Activated naive CD4-positive, alpha-beta T cell treated with anti-CD3 and anti-CD28 coated beads, Interleukin-2, amount 10 ng/mL, durations not matched to agents 7 days and 5 days (primary cell): ENCODE measurements at regions of chr12 and their contacts with region 1.

Region 1: DNA sequence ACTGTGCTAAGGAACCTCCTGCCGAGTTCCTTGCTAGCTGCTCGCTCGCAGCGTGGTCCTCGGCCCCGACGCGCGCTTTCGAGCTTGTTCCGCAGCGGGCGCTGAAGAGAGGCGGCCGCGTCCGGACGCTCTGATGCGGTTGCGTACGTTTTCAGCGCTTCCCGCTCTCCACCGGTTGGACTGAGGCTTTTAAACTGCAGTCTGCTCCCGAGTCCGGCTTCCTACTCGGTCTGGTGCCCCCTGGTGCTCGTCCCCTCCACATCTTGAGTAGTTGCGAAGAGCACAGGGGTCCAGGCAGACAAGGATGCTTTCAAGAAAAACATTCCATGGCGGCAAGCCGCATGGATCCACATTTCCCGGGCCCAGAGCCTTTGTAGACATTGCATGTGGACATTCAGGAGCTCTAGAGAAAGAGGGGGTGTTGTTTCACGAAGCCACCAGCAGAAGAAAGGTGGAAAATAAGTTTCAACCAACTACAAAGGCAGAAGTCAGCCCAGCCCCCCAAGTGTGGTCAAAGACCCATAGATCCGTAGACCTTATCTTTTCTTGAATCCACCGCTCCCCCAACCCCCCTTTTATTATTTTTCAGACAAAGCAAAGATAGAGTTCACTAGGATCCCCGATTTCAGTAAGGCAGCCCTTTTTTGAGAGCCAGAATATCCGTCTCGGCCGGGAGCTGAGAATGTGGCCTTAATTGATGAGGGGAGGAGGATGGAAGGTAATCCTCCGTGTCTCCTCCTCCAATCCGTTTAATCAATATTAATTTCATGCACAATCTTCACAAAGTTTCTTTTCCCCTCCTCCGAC is 984 bp upstream of the WNK1 start:
- DNase-seq: peak; percentile 93
- H3K4me3 Mint-ChIP-seq: no peak overlapping the region
- H3K27ac Mint-ChIP-seq: no peak overlapping the region
- H3K4me1 Mint-ChIP-seq: peaks cover 25% of the 10 kb centered on the region
- H3K27me3 Mint-ChIP-seq: no peaks in the 10 kb centered on the region

Region 2: GRCh38 chr12:614411-614970 is 136.9 kb before region 1 on chr12:
- CTCF ChIA-PET with region 1: interaction called, 36 read pairs
- DNase-seq: peak; percentile 53
- H3K4me3 Mint-ChIP-seq: no peak overlapping the region
- H3K27ac Mint-ChIP-seq: no peak overlapping the region
- H3K4me1 Mint-ChIP-seq: peaks cover 51% of the 10 kb centered on the region
- H3K27me3 Mint-ChIP-seq: peaks cover 15% of the 10 kb centered on the region

Region 3: GRCh38 chr12:650983-651382 is 100.4 kb before region 1 on chr12:
- CTCF ChIA-PET with region 1: interaction called, 32 read pairs
- DNase-seq: no peak
- H3K4me3 Mint-ChIP-seq: no peak overlapping the region
- H3K27ac Mint-ChIP-seq: no peak overlapping the region
- H3K4me1 Mint-ChIP-seq: peaks cover 9% of the 10 kb centered on the region
- H3K27me3 Mint-ChIP-seq: peaks cover 4% of the 10 kb centered on the region

Region 4: GRCh38 chr12:674272-674781 is 77.1 kb before region 1 on chr12:
- CTCF ChIA-PET with region 1: interaction called, 31 read pairs
- DNase-seq: peak; percentile 80
- H3K4me3 Mint-ChIP-seq: peak overlapping the region; percentile 71
- H3K27ac Mint-ChIP-seq: peak overlapping the region; percentile 98
- H3K4me1 Mint-ChIP-seq: peaks cover 69% of the 10 kb centered on the region
- H3K27me3 Mint-ChIP-seq: peaks cover 4% of the 10 kb centered on the region

Region 5: GRCh38 chr12:726281-727140 is 24.9 kb before region 1 on chr12:
- CTCF ChIA-PET with region 1: interaction called, 37 read pairs
- DNase-seq: no peak
- H3K4me3 Mint-ChIP-seq: no peak overlapping the region
- H3K27ac Mint-ChIP-seq: peak overlapping the region; percentile 4
- H3K4me1 Mint-ChIP-seq: peaks cover 69% of the 10 kb centered on the region
- H3K27me3 Mint-ChIP-seq: peaks cover 4% of the 10 kb centered on the region